PC-3 (cell line): ENCODE measurements at regions of chr20 and their contacts with region 1.

Region 1: DNA sequence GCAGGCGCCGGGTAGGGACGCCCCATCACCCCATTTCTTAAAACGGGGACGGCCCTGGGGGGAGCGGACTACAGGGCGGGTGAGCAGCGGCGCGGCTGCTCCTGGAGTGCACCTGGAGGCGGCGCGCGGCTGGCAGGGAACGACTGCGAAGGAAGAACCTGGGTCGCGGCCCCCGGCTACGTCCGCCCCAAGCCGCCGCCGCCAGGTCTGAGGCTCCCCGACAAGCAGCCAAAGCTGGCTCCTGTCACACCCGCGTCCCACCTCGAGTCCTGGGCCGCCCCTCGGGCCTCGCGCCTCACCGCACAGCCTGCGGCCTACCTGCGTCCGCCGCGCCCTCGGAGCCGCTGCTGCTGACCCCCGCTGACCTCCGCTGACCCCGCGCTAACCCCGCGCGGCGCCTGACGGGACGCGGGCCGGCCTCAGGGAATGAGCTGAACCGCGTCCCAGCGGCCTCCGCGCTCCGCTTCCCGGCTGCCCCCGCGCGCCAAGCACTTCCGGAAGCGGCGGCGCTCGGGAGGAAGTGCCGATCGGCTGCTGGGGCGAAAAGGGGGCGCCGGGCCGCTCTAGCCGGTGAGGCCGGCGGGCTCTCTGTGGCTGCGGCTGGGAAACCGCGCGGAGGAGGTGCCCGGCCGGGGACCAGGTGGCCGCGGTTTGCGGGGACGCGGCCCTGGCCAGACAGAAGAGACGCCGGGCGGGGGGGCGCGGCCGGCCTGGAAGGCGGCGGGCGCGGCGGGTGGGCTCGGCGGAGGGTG is at the starts of genes ARFRP1 and ZGPAT:
- DNase-seq: peak; percentile 78
- ATAC-seq: peak; percentile 83
- H3K4me3 ChIP-seq: peak within 1 kb of the TSS; percentile 91
- H3K27ac ChIP-seq: peak within 1 kb of the TSS; percentile 47
- H3K4me1 ChIP-seq: peaks cover 18% of the 10 kb centered on the region
- H3K27me3 ChIP-seq: no peaks in the 10 kb centered on the region
- CTCF ChIP-seq: no peak
- total RNA-seq, gene ARFRP1: 71.2 and 73.5 TPM in 2 replicates
- total RNA-seq, gene ZGPAT: 37.9 and 56.8 TPM in 2 replicates

Region 2: DNA sequence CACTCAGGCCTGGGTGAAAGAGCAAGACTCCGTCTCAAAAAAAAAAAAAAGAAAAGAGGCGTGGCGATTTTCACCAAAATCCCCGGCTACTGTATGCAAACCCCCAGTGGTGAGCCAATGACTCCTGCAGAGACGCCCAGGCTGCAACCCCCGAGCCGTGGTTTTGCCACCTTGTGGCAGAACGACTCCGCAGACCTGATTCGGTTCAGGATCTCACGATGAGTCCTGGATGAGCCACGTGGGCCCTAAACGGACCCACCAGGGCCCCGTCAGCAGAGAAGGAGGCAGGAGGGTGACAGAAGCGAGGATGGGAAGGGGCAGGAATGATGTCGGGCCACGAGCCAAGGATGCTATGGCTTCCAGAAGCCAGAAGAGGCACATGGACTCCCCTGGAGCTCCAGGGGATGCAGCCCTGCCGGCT is 74.3 kb after region 1 on chr20:
- CTCF ChIA-PET with region 1: no interaction called
- POLR2A ChIA-PET with region 1: no interaction called
- intact Hi-C with region 1: loop called (anchors 5 kb)
- DNase-seq: peak; percentile 59
- ATAC-seq: peak; percentile 70
- H3K4me3 ChIP-seq: no peak overlapping the region
- H3K27ac ChIP-seq: no peak overlapping the region
- H3K4me1 ChIP-seq: peaks cover 13% of the 10 kb centered on the region
- H3K27me3 ChIP-seq: no peaks in the 10 kb centered on the region
- CTCF ChIP-seq: peak; percentile 49; the same call in 1 of the 2 replicates